Posterior vena cava (tissue), 2 donors: ENCODE measurements at regions of chr14 and their contacts with region 1.

Region 1: DNA sequence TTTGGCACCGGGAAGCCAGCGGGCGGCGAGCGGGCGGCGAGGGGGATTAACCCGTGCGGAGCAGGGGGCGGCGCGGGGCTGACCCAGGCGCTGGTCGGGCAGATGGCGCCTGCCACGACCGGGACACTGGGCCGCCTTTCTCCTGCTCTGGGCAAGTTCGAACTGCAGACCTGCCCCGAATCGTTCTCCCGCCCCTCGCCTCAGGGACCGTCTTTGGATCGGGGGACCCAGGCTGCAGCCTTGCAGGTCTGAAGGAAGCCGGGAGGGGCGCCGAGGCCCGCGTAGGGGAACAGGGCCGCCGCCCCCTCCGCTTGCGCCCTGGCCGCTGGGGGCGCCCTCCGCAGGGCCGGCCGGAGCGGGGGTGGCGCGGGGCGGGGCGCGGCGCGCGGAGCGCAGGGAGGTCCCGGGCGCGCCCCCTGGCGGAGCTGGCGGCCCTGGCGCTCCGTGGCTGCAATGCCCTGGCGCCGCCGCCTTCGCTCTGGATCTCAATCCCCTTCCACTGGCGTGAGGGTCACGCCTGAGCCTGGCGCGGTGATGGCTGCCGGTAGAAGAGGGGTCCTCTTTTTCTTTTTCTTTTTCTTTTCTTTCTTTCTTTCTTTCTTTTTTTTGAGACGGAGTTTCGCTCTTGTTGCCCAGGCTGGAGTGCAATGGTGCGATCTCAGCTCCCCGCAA is 449 bp upstream of the LTBP2 start:
- DNase-seq: peak; percentile 95

Region 2: GRCh38 chr14:74362361-74362915 is 250.0 kb before region 1 on chr14:
- intact Hi-C with region 1: loop called in 1 of 2 experiments (anchors 10 kb)
- DNase-seq: peak; percentile 93

Region 3: DNA sequence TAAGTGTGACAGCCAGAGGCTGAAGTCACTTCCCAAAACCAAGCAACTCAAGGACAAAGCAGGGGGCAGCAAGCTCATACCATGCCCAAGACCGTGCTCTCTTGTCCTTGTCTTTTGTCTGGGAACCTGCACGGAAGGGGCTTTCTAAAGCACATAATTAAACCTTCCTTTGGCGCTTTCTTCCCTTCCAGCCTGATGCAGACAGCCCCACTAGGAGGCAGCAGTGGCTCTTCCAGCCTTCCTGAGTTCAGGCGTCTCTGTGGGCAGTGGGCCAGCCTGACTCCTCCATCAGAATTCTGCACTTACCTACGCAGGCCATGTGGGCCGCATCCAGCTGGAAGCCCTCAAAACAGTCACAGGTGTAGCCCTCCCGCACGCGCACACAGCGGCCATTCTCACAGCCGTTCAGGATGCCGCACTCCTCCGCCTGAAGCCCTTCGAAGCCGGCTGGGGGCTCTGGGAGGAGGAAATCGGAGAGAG is 111.3 kb before region 1 on chr14:
- intact Hi-C with region 1: loop called in 1 of 2 experiments (anchors 5 kb)
- DNase-seq: peak; percentile 91

Region 4: GRCh38 chr14:74671789-74672188 is 59.3 kb after region 1 on chr14:
- intact Hi-C with region 1: no loop called
- DNase-seq: no peak

Region 5: DNA sequence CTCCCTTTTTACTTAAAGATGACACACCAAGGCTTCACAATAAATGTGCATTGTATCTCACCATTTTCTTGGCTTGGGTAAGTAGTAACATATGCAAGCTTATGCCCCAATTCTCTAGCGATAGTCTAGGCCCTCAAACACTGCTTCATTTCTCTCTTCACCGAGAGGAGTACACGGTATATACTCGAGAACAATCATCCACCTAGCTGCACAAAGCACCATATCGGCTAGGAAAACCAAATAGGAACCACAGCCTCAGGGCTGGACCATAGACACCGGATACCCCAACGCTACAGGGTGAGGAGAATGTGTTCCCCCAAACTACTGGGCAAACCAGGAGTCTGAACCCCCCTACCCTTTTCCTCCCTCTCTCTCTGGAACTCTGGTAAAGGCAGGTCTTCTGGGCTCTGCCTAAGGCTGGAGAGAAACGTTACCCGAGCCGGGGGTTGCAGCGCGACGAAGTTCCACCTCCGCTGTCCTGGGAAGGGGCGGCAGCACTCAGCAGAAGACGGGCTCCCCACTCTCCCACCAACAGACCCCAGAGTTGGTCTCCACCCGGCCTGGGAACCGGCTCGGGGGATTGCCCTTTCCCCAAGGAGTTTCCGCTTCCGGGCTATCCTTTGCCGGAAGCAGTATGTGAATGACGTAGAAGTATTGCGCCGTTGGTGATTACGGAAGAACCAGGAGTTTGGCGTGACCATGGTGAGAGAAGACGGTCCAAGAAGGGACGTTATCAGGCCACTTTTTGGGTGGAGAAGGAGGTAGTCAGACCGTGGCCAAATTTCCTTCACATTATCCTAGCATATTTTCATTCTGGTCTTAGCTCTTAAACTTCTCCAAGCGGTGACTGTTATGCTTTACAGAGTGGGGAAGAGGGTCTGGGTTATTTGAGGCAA is 100.3 kb after region 1 on chr14 and contains the starts of genes AREL1 and FCF1:
- intact Hi-C with region 1: loop called in 1 of 2 experiments (anchors 10 kb)
- DNase-seq: peak; percentile 89
- total RNA-seq, gene AREL1: 22.1 to 25.7 TPM
- total RNA-seq, gene FCF1: 41.2 to 42.4 TPM

Region 6: GRCh38 chr14:74793506-74794168 is 181.2 kb after region 1 on chr14:
- intact Hi-C with region 1: loop called in 1 of 2 experiments (anchors 5 kb)
- DNase-seq: no peak

Region 7: GRCh38 chr14:74804219-74804826 is 191.8 kb after region 1 on chr14:
- intact Hi-C with region 1: loop called in 1 of 2 experiments (anchors 10 kb)
- DNase-seq: no peak

Region 8: DNA sequence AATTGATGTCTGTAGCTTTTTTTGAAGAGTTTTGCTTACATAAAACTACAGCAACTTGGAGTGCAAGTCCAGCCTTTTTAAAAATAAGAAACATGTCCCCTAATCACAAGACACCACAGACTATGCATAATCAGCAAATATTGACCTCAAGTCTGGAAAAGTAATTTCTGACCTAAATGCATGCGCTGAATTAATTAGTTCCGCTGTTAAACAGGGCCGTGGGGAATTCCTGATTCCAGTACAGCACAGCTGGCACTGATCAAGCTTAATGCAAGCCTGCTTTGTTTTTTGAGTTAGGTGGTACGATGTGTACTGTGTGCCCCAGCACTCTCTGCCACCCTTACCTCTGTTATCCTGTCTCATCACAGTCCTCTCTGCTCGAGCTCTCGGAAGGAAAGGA is 429.5 kb after region 1 on chr14:
- intact Hi-C with region 1: no loop called
- DNase-seq: no peak

Region 9: DNA sequence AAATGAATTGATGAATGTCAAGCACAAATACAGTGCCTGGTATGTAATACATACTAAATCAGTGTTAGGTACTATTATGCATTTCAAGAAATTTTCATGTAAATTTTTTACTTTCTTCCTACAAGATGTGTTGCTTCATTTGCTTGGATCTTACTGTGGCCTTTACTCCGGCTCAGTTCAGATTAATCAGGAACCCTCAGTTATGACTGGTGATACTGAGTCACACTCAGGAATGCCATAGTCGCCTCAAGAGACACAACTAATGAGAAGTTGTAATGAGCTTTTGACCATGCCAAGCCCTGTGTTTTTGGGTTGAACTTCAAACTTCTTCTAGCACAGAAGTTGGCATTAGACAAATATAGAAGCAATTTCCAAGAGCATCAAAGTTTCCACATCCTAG is 1273.3 kb after region 1 on chr14:
- intact Hi-C with region 1: no loop called
- DNase-seq: no peak